Activated CD4-positive, alpha-beta memory T cell treated with anti-CD3 and anti-CD28 coated beads, Interleukin-2, amount 10 ng/mL, durations not matched to agents 7 days and 5 days (primary cell): ENCODE measurements at regions of chr9 and their contacts with region 1.

Region 1: GRCh38 chr9:128383007-128383753 is 12.0 kb downstream of the URM1 start:
- DNase-seq: no peak
- H3K4me3 Mint-ChIP-seq: no peak overlapping the region
- H3K27ac Mint-ChIP-seq: no peak overlapping the region
- H3K4me1 Mint-ChIP-seq: no peaks in the 10 kb centered on the region
- H3K27me3 Mint-ChIP-seq: no peaks in the 10 kb centered on the region

Region 2: DNA sequence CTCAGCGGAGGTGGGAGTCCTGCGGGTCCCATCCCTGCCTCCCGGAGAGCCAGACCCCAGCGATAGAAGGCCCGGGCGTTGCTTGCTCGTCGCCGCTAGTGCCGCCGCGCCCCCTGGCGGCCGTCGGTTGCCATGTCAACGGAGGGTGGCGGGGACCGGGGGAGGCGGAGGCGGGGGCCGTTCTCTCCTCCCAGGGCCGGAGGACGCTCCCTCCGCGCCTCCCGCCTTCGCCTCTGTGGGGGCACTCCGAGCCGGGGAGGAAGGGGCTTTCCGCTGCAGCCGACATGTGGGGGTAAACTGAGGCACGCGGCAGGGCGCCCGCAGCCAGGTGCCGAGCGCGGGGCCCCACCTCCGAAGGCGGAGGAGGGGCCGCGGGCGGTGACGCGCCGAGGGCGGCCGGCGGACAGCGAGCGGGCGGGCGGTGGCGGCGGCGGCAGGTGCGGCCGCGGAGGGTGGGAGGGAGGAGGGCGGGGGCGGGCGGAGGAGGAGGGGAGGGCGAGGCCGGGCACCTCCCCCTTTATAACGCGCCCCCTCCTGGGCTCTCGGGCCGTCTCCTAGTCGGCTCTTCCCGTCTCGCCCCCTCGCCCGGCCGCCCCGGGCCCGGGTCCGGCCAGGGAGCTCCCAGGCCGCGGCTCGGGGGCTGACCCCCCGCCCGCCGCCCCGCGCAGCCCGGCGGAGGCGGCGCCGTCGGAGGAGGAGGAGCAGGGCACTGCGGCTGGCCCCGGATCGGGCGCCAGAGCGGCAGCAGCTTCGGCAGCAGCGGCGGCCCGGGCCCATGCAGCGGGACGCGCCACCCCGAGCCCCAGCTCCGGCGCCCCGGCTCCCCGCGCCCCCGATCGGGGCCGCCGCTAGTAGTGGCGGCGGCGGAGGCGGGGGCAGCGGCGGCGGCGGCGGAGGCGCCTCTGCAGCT is 597.9 kb before region 1 on chr9:
- CTCF ChIA-PET with region 1: no interaction called
- POLR2A ChIA-PET with region 1: no interaction called
- DNase-seq: peak; percentile 93
- H3K4me3 Mint-ChIP-seq: peak overlapping the region; percentile 97
- H3K27ac Mint-ChIP-seq: peak overlapping the region; percentile 93
- H3K4me1 Mint-ChIP-seq: peaks cover 78% of the 10 kb centered on the region
- H3K27me3 Mint-ChIP-seq: no peaks in the 10 kb centered on the region

Region 3: GRCh38 chr9:128159784-128160602 is 223.2 kb before region 1 on chr9 and contains the start of gene BBLN:
- CTCF ChIA-PET with region 1: no interaction called
- POLR2A ChIA-PET with region 1: no interaction called
- DNase-seq: peak; percentile 95
- H3K4me3 Mint-ChIP-seq: peak within 1 kb of the TSS; percentile 78
- H3K27ac Mint-ChIP-seq: peak within 1 kb of the TSS; percentile 80
- H3K4me1 Mint-ChIP-seq: peaks cover 23% of the 10 kb centered on the region
- H3K27me3 Mint-ChIP-seq: no peaks in the 10 kb centered on the region
- total RNA-seq, gene BBLN: 91.3 to 94.1 TPM

Region 4: GRCh38 chr9:128370826-128371621 is 12.2 kb before region 1 on chr9 and contains the start of gene URM1:
- CTCF ChIA-PET with region 1: interaction called, 3 read pairs
- POLR2A ChIA-PET with region 1: interaction called, 12 read pairs
- DNase-seq: peak; percentile 97
- H3K4me3 Mint-ChIP-seq: peak within 1 kb of the TSS; percentile 90
- H3K27ac Mint-ChIP-seq: peak within 1 kb of the TSS; percentile 93
- H3K4me1 Mint-ChIP-seq: peaks cover 32% of the 10 kb centered on the region
- H3K27me3 Mint-ChIP-seq: no peaks in the 10 kb centered on the region
- total RNA-seq, gene URM1: 62.8 to 64.3 TPM

Region 5: DNA sequence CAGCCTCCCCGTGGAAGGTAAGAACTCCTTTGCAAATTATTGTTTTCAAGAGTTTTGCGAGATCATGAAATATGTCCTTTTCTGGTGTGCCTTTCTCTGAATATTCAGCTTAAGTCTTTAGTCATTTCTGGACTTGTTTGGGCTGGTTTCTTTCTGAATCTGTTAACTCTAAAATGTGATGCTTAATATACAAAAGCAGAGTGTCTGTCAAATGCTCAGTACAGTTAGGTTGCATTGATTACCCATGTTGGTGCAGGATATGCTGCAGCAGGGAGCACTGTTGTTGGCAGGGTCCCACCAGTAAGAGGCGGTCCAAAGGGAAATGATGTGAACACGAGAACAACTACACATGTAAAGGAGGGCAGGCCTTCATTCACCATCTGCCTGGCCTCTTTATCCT is 216.9 kb after region 1 on chr9:
- CTCF ChIA-PET with region 1: no interaction called
- POLR2A ChIA-PET with region 1: no interaction called
- DNase-seq: no peak
- H3K4me3 Mint-ChIP-seq: no peak overlapping the region
- H3K27ac Mint-ChIP-seq: peak overlapping the region; percentile 26
- H3K4me1 Mint-ChIP-seq: peaks cover 9% of the 10 kb centered on the region
- H3K27me3 Mint-ChIP-seq: no peaks in the 10 kb centered on the region

Region 6: DNA sequence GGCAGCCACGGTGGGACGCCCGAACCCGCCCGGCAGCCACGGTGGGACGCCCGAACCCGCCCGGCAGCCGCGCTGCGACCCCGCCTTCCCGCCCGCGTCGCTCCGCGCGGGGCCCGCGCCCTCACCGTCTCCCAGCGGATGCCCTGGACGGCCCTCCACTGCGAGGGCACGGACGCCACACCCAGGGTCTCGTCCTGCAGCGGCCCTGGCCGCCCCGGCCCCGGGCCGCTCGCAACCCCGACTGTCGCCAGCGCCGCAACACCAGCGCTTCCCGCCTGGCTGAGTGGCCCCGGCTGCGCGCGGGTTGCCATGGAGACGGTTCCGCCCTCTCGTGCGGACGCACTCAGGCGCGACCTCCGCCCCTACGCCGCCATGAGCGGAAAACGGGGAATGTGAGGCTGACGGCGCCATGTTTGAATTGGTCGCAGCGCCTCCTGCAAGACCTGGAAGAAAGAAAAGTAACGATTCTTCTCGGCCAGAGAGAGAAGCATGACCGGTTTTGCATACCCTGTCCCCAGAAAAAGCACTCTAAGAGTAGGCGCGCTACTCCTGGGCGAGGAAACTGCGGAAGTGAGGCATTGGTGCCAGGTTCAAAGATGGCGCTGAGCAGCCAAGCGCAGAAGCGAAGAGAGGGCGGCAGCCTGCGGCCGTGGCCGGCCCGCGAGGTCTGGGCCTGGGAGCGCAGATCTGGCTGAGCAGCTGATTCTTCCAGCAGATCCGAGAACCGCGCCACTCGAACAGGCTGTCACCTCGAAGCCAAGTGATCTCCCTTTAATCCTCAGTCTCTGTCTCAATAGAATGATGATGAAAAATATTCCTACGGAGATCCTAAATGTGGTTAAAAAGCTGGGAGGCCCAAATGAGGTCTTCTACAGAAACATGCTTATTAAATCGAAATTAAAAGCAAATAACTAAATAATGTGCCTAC is 273.5 kb after region 1 on chr9 and contains the start of gene DYNC2I2:
- CTCF ChIA-PET with region 1: no interaction called
- POLR2A ChIA-PET with region 1: no interaction called
- DNase-seq: peak; percentile 97
- H3K4me3 Mint-ChIP-seq: peak within 1 kb of the TSS; percentile 89
- H3K27ac Mint-ChIP-seq: peak within 1 kb of the TSS; percentile 99
- H3K4me1 Mint-ChIP-seq: peaks cover 18% of the 10 kb centered on the region
- H3K27me3 Mint-ChIP-seq: no peaks in the 10 kb centered on the region
- total RNA-seq, gene DYNC2I2: 51.5 to 53.5 TPM